ENCODE measurements at regions of chr14 and their contacts with region 1.

Region 1: GRCh38 chr14:88492272-88493089 is 62.3 kb downstream of the PTPN21 start:
- DNase-seq: peak; percentile 26
- H3K4me3 ChIP-seq: no peak overlapping the region
- CTCF ChIP-seq: peak; percentile 80

Region 2: GRCh38 chr14:88359500-88359899 is 133.0 kb before region 1 on chr14:
- CTCF ChIA-PET with region 1: no interaction called
- POLR2A ChIA-PET with region 1: no interaction called
- DNase-seq: no peak
- H3K4me3 ChIP-seq: no peak overlapping the region
- CTCF ChIP-seq: no peak

Region 3: GRCh38 chr14:88481794-88482193 is 10.7 kb before region 1 on chr14:
- CTCF ChIA-PET with region 1: interaction called, 18 read pairs
- POLR2A ChIA-PET with region 1: no interaction called
- DNase-seq: no peak
- H3K4me3 ChIP-seq: no peak overlapping the region
- CTCF ChIP-seq: no peak

Region 4: DNA sequence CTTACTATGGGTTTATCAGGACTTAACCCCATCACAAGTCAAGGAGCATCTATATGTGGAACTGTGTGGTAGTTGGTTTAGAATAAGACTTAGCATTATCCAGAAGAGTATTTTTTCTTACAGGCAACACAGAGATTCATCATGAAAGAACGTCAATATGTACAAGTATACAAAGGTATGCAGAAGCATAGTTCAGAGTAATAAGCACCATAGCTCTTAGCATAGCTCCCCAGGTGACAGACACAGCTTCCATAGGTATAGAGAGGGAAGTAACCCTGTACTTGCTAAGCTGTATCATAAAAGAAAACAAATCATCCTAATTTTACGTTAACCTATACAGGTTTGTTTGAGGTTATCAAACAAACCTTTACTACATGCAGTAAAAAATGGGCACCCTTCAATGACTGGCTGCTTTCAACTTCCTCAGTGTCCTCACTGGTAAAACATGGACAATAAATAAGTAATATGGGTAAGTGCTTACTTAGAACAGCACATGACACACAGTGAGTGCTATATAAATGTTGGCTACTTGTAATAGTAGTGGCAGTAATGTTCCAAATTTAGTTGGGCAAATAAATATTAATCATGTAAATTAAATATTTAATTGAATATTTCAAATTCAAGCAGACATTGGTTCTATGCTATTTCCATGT is 11.4 kb after region 1 on chr14:
- CTCF ChIA-PET with region 1: interaction called, 25 read pairs
- POLR2A ChIA-PET with region 1: no interaction called
- DNase-seq: no peak
- H3K4me3 ChIP-seq: no peak overlapping the region
- CTCF ChIP-seq: no peak

Region 5: DNA sequence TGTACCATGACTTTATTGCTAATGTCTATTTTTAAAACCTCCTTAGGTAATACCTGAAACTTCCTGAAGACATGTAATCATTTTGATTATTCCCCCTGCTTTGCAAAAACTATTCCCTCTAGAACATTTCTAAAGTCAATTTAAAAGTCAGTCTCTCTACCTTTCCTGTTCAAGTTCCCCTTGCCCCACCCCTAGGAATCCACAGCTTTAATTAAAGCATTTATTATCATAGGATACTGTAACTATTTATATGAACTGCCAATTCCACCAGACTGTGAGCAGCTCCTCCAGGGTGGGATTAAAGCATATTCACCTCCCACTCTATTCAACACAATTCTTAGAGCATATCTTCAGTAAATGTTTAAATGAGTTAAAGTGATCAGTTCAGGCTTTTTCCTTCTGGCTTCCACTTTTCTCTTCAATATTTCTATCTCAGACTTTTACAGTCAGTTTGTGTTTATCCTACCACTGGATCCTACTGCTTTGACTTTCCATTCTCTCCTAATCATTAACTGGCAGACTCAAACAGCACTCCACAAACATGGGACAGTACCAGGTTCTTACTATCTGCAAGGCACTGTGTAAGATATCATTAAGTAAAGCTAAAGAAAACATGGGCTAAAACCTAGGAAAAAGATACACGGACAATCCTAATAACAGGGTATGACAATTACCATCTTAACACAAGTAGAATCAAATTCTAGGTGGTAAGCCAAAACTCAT is 23.2 kb after region 1 on chr14:
- CTCF ChIA-PET with region 1: interaction called, 10 read pairs
- POLR2A ChIA-PET with region 1: no interaction called
- DNase-seq: no peak
- H3K4me3 ChIP-seq: no peak overlapping the region
- CTCF ChIP-seq: no peak

Region 6: GRCh38 chr14:88551094-88551870 is 58.8 kb after region 1 on chr14:
- CTCF ChIA-PET with region 1: interaction called, 15 read pairs
- POLR2A ChIA-PET with region 1: no interaction called
- DNase-seq: no peak
- H3K4me3 ChIP-seq: peak overlapping the region; percentile 80
- CTCF ChIP-seq: peak; percentile 44

Region 7: GRCh38 chr14:88562831-88563686 is 70.6 kb after region 1 on chr14 and contains the start of gene ZC3H14:
- CTCF ChIA-PET with region 1: interaction called, 54 read pairs
- POLR2A ChIA-PET with region 1: no interaction called
- DNase-seq: no peak
- H3K4me3 ChIP-seq: peak within 1 kb of the TSS; percentile 90
- CTCF ChIP-seq: no peak